ENCODE measurements at regions of chr11 and their contacts with region 1.

Region 1: GRCh38 chr11:60992842-60993409 is 21.4 kb downstream of the CD6 start:
- DNase-seq: no peak
- H3K4me3 Mint-ChIP-seq: peak overlapping the region; percentile 68
- H3K27ac Mint-ChIP-seq: peak overlapping the region; percentile 95
- H3K4me1 Mint-ChIP-seq: peaks cover 72% of the 10 kb centered on the region
- H3K27me3 Mint-ChIP-seq: no peaks in the 10 kb centered on the region

Region 2: DNA sequence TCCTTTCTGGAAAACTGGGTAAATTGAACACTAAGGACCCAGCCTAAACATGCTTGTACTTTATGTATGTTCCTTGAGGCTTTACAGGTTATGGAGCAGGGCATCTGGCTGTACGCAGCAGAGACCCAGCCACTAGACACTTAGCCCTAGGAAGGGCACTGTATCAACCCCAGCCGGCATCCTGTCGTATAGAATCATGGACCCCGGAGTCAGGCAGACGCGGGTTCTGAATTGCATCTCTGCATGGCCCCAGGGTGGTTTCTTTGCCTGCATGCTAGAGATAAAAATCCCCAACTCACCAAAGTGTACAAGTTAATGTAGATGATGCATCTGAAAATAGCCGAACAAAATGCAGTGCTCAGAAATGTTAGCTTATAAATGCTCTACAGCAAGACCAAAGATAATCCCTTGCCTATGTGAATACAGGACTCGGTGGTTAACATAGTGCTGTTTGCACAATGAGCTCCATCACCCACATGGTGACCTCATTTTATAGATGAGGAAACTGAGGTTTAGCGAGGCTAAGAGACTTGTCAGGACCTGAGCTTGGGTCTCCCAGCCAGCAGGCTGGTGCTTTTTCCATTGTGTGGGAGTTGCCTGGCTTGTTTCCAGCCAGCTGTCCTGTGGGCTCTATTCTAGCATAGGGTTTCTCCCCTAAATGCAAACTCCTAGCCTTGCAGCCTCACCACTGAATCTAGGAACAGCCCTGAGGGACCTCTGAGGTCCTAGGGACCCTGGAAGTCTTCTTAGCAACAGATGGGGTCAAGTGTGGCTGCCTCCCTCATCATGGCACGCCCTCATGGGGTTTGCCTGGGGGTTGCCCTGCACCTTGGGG is 14.2 kb before region 1 on chr11:
- intact Hi-C with region 1: loop called (anchors 2 kb)
- DNase-seq: peak; percentile 54
- H3K4me3 Mint-ChIP-seq: peak overlapping the region; percentile 86
- H3K27ac Mint-ChIP-seq: peak overlapping the region; percentile 92
- H3K4me1 Mint-ChIP-seq: peaks cover 87% of the 10 kb centered on the region
- H3K27me3 Mint-ChIP-seq: no peaks in the 10 kb centered on the region

Region 3: GRCh38 chr11:61004180-61004611 is 11.3 kb after region 1 on chr11:
- intact Hi-C with region 1: loop called (anchors 1 kb)
- DNase-seq: no peak
- H3K4me3 Mint-ChIP-seq: peak overlapping the region; percentile 68
- H3K27ac Mint-ChIP-seq: peak overlapping the region; percentile 87
- H3K4me1 Mint-ChIP-seq: peaks cover 73% of the 10 kb centered on the region
- H3K27me3 Mint-ChIP-seq: no peaks in the 10 kb centered on the region

Region 4: DNA sequence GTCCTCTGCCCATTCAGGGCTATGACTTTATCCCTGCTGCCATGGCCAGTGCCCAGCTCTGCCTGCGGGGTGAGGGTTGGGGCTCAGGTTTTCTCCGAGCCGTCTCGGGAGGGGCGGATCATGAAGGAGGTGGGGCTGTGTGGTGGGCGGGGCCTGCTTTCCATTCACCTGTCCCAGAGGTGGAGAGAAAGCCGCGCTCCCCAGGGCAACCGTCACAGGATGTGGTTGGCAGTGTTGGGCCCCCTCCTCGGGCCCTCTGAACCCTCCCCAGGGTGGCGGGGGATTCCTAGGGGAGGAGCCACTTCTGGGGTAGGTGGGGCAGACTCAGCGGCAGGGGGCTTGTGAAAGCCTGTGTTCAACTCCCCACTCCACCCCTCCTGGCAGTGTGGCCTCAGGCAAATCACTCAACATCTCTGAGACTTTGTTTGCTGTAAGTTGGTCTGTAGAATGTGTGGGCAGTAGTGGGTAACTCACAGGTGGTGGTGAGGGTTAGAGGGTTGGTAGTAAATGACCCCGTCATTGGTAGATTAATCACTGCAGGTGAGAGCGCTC is 28.8 kb after region 1 on chr11:
- intact Hi-C with region 1: loop called (anchors 1 kb)
- DNase-seq: peak; percentile 78
- H3K4me3 Mint-ChIP-seq: peak overlapping the region; percentile 66
- H3K27ac Mint-ChIP-seq: peak overlapping the region; percentile 89
- H3K4me1 Mint-ChIP-seq: peaks cover 65% of the 10 kb centered on the region
- H3K27me3 Mint-ChIP-seq: no peaks in the 10 kb centered on the region

Measured in activated T-helper 1 cell treated with anti-CD3 and anti-CD28 coated beads, Interleukin-12 subunit alpha, Interleukin-12 subunit beta, Interleukin-2, Interleukin-4 antibody, amounts not matched to agents 30 ng/mL and 10 ng/mL and 1 ng/mL, durations not matched to agents 14 hours and 24 hours and 36 hours (primary cell).